Posterior vena cava (tissue), 2 donors: ENCODE measurements at regions of chr12 and their contacts with region 1.

Region 1: GRCh38 chr12:39443081-39443928 is at the start of gene KIF21A:
- DNase-seq: peak; percentile 96
- total RNA-seq, gene KIF21A: 11.2 to 11.7 TPM

Region 2: DNA sequence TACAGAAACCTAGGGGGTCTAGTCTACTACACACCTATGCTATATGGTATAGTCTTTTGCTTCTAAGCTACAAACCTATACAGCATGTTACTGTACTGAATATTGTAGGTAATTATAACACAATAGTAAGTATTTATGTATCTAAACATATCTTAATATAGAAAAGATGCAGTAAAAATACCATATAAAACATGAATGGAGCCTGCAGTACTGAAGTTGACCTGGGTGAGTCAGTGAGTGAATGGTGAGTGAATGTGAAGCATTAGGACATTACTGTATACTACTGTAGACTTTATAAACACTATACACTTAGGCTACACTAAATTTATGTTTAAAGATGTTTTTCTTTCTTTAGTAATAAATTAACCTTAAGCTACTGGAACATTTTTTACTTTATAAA is 189.4 kb after region 1 on chr12:
- intact Hi-C with region 1: no loop called
- DNase-seq: no peak

Region 3: DNA sequence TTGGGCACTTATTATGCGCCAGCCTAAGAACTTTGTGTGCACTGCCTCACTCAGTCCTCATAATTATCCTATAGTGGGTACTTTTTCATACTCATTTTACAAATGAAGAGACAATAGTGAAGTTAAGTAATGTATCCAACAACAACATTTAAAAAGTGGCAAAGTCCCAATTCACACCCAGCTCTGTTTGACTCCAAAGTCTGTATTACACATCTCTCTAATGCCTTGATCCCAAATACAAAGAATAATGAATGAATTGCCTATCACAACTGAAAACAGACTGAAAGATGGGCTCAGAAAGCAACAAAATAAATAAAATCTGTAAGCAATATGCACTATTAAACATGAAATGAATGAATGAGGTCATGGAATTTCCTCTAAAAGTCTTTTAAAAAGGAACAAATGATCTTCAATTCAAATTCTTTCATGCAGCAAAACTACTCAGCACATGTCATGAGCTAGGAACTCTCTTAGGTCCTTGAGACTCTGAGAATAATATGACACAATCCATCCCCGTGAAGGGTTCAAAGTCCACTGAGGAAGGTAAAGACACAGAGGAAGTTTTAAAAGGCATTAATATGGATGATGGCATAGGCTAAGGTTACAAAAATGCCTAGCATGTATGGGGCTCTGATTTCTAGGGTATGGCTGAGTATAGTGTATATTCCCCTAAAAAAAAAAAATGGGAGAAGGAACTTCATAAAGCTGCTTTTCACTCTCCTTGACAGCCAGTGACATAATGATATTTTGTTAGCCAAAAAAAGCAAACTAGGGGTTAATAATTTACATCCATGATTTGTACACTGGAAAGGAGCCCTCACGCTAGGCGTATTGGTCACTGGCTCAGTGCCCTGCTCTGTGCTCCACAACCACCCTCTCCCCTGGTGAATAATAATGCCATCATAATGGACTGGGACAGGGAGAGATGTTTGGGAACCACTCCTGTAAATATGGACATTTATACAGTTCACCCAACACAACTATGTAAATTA is 559.2 kb after region 1 on chr12:
- intact Hi-C with region 1: loop called in 1 of 2 experiments (anchors 5 kb)
- DNase-seq: no peak